ENCODE measurements at regions of chr6 and their contacts with region 1.

Region 1: GRCh38 chr6:43143235-43144124 is 27.6 kb upstream of the SRF start:
- DNase-seq: peak; percentile 62
- H3K4me3 ChIP-seq: no peak overlapping the region
- H3K27me3 ChIP-seq: no peaks in the 10 kb centered on the region
- CTCF ChIP-seq: peak; percentile 99

Region 2: DNA sequence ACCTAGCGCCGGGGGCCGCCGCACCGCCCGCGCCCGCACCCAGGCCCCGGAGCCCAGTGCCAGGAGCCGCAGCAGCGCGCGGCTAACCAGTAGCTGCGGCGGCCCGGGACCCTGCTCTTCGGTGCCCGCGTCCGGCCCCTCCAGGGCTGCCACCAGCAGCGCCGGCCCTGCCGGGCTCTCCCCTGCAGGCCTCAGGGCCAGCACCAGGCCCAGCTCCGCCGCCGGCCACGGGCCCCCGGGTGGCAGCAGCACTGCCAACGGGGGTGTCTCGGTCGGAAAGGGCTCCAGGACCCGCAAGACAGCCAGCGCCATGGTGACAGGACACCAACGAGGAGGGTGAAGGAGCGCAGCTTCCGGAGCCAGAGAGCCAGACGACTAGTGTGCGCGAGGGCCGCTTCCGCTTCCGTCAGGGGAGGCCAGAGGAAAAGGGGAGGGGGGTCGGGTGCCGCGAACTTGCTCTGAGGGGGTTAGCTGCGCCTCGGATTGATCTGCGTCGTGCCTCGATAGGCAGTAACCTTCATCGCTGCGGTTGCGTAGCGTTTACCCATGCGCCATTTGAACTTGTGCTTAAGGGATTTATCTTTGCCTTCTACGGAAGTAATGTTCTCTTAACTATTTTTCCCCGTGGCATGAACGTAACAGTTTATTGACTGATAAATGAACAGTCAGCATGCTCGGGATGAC is 164.5 kb before region 1 on chr6 and contains the start of gene PEX6:
- CTCF ChIA-PET with region 1: interaction called, 14 read pairs
- POLR2A ChIA-PET with region 1: no interaction called
- DNase-seq: no peak
- H3K4me3 ChIP-seq: peak within 1 kb of the TSS; percentile 72
- H3K27me3 ChIP-seq: no peaks in the 10 kb centered on the region
- CTCF ChIP-seq: no peak
- polyA plus RNA-seq, gene PEX6: 2.8 and 5.6 TPM in 2 replicates

Region 3: GRCh38 chr6:43059168-43060033 is 84.1 kb before region 1 on chr6 and contains the starts of genes KLC4 and MRPL2:
- CTCF ChIA-PET with region 1: interaction called, 25 read pairs
- POLR2A ChIA-PET with region 1: no interaction called
- DNase-seq: peak; percentile 96
- H3K4me3 ChIP-seq: peak within 1 kb of the TSS; percentile 71
- H3K27me3 ChIP-seq: no peaks in the 10 kb centered on the region
- CTCF ChIP-seq: no peak
- polyA plus RNA-seq, gene KLC4: 13.2 and 16.8 TPM in 2 replicates
- polyA plus RNA-seq, gene MRPL2: 20.5 and 22.8 TPM in 2 replicates

Region 4: DNA sequence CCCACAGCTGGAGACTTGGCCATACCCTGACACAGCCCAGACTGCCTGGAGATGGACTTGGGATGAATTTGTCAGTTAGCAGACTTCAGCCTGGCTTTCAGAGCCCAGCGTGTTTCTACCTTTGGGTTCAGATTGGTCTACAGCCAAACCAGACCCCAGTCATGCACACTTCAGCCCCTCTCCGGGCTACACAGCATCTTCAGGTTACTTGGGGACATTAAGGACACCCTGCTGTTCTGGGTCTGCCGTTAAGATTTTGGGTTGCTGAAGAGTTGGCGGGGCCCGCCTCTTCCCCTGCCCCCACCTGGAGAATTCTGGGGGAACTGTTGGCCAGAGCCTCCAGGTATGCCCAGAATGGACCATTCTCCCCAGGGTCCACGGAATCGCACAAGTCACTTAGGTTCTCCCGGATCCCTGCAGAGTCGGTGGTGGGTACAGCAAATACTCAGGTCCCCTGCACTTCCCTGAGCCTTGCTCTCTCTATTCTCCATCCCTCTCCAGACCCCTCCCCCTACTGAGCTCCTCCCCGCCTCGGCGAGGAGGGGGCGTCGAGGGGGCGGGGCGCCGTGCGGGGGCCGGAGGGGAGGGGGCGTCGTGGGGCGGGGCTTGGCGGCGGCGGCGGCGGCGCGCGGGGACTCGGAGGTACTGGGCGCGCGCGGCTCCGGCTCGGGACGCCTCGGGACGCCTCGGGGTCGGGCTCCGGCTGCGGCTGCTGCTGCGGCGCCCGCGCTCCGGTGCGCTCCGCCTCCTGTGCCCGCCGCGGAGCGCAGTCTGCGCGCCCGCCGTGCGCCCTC is 67.6 kb before region 1 on chr6 and contains the start of gene PTK7:
- CTCF ChIA-PET with region 1: interaction called, 42 read pairs
- POLR2A ChIA-PET with region 1: no interaction called
- DNase-seq: no peak
- H3K4me3 ChIP-seq: peak within 1 kb of the TSS; percentile 79
- H3K27me3 ChIP-seq: no peaks in the 10 kb centered on the region
- CTCF ChIP-seq: no peak
- polyA plus RNA-seq, gene PTK7: 187 and 362 TPM in 2 replicates

Region 5: GRCh38 chr6:43129434-43130194 is 13.9 kb before region 1 on chr6:
- CTCF ChIA-PET with region 1: interaction called, 34 read pairs
- POLR2A ChIA-PET with region 1: no interaction called
- DNase-seq: no peak
- H3K4me3 ChIP-seq: no peak overlapping the region
- H3K27me3 ChIP-seq: no peaks in the 10 kb centered on the region
- CTCF ChIP-seq: peak; percentile 89

Region 6: GRCh38 chr6:43203029-43203717 is 59.7 kb after region 1 on chr6:
- CTCF ChIA-PET with region 1: no interaction called
- POLR2A ChIA-PET with region 1: no interaction called
- DNase-seq: no peak
- H3K4me3 ChIP-seq: no peak overlapping the region
- H3K27me3 ChIP-seq: no peaks in the 10 kb centered on the region
- CTCF ChIP-seq: no peak

Region 7: GRCh38 chr6:43496370-43497128 is 353.1 kb after region 1 on chr6:
- CTCF ChIA-PET with region 1: no interaction called
- POLR2A ChIA-PET with region 1: interaction called, 24 read pairs
- DNase-seq: no peak
- H3K4me3 ChIP-seq: no peak overlapping the region
- H3K27me3 ChIP-seq: no peaks in the 10 kb centered on the region
- CTCF ChIP-seq: peak; percentile 76

Region 8: DNA sequence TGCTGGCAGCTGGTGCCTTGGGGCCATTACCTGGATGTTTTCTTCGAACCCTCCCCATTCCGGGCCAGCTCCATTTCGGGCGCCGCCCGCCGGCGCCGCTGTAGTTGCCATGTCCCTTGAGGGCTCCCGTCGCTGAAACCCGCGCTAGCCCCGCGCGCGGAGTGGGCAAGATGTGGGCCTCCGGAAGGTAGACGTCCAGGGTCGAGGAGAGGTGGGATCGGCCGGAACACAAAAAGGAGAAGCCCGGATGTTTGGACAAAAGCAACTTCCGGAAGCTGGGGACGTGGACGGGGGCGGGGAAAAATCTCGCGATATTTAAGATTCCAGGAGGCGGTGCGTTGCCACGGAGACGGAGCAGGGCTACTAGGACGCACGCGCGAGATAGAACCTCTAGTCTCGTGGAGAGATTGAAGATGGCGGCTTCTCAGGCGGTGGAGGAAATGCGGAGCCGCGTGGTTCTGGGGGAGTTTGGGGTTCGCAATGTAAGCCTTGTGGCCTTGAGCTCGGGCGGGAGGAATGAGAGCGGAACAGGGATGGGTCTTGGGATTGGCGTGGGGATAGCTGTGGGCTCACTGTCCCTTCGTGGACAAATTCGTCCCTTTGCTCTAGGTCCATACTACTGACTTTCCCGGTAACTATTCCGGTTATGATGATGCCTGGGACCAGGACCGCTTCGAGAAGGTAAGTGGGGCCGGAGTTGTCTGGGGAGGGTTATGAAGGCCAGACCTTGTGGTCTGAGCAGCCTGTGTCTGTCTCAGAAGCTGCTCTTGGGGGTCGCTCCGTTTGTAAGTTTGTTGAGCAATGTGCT is 373.4 kb after region 1 on chr6 and contains the starts of genes POLR1C and YIPF3:
- CTCF ChIA-PET with region 1: no interaction called
- POLR2A ChIA-PET with region 1: no interaction called
- DNase-seq: peak; percentile 85
- H3K4me3 ChIP-seq: peak within 1 kb of the TSS; percentile 92
- H3K27me3 ChIP-seq: no peaks in the 10 kb centered on the region
- CTCF ChIP-seq: no peak
- polyA plus RNA-seq, gene POLR1C: 37.5 and 41.5 TPM in 2 replicates
- polyA plus RNA-seq, gene YIPF3: 291 and 355 TPM in 2 replicates